AG04449 (cell line): ENCODE measurements at regions of chr3 and their contacts with region 1.

Region 1: GRCh38 chr3:35908366-35909232 is 269.3 kb downstream of the ARPP21 start:
- DNase-seq: peak; percentile 23
- H3K4me3 ChIP-seq: no peak overlapping the region
- CTCF ChIP-seq: peak; percentile 53

Region 2: DNA sequence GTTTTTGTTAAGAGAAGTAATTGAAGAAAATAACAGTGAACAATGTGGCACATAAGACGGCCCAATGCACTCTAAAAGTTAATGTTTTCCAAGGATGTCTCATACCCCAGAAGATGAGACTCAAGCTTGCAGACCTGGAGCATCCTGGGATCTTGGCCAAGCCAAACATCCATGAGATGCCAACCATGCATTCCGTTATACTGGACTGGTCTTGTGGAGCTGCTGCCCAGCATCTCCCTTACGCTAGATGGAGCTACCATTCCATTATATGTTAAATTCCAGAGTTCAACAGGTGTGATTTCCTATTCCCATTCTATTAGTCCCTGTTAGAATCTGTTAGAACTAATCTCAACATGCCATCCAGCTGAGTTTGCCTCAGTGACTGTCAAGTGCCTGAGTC is 1928.3 kb before region 1 on chr3:
- CTCF ChIA-PET with region 1: interaction called, 20 read pairs
- POLR2A ChIA-PET with region 1: no interaction called
- DNase-seq: peak; percentile 84
- H3K4me3 ChIP-seq: no peak overlapping the region
- CTCF ChIP-seq: peak; percentile 75